Activated B cell treated with CpG ODN at 0.5 μM for 24 hours (primary cell): ENCODE measurements at regions of chr22 and their contacts with region 1.

Region 1: DNA sequence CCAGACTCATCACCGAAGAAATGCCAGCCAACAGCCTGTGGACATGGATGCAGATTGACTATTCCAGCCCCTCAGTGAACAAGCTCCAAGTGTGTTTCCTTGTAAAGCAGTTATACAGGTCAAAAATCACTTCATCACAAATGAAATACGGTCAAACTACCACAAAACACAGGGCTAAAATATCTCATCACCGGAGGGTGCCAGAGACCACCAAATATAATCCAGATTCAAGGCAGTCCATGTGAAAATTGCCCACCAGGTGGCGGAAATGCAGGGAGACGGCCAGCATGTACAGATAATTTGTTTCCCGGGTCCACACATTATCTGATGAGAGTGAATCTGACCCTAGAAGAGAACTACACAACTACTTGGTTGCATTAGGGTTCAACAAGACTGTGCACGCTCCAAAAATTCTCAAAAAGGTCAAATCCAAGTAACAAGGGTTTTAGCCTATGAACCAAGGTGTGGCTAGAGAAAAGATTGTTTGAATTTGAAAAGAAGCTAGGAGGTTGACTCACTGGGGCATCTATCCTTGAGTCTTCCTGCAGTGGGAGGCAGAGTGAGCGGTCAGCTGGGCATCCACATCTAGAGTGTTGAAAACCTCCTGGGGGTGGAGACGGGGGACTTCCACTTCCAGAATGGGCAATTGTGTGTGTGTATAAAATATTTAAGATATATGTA is 71.7 kb downstream of the IGLL5 start:
- DNase-seq: no peak
- ATAC-seq: peak; percentile 63
- H3K4me3 Mint-ChIP-seq: no peak overlapping the region
- H3K27ac Mint-ChIP-seq: no peak overlapping the region
- H3K4me1 Mint-ChIP-seq: peaks cover 15% of the 10 kb centered on the region
- H3K27me3 Mint-ChIP-seq: no peaks in the 10 kb centered on the region
- CTCF ChIP-seq: peak; percentile 94

Region 2: DNA sequence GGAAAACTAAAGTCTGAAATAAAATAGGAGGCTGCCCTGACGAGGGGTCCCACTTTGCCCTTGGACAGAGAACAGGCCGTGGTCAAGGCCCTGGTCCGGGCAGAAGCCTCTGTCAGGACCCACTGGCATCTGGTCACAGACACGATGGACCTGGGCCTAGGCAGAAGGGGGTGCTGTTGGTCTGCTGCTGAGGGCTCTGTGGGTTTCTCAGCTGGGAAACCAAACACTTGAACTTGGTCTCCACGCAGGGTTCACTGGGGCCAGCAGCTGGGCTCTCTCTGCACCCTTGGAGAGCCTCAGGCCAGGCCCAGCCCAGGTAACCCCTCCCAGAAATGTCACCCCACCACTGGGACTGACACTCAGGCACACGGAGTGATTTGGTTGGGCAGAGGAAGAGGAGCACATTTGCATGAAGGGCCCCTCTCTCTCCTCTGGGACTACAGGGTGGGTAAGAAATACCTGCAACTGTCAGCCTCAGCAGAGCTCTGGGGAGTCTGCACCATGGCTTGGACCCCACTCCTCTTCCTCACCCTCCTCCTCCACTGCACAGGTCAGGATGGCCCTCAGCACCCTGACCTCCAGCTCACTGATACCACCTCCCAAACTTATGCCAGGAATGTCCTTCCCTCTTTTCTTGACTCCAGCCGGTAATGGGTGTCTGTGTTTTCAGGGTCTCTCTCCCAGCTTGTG is 928.6 kb before region 1 on chr22:
- CTCF ChIA-PET with region 1: interaction called, 5 read pairs
- POLR2A ChIA-PET with region 1: no interaction called
- intact Hi-C with region 1: loop called (anchors 1 kb)
- DNase-seq: peak; percentile 62
- ATAC-seq: peak; percentile 79
- H3K4me3 Mint-ChIP-seq: peak overlapping the region; percentile 84
- H3K27ac Mint-ChIP-seq: peak overlapping the region; percentile 97
- H3K4me1 Mint-ChIP-seq: peaks cover 84% of the 10 kb centered on the region
- H3K27me3 Mint-ChIP-seq: no peaks in the 10 kb centered on the region
- CTCF ChIP-seq: no peak

Region 3: DNA sequence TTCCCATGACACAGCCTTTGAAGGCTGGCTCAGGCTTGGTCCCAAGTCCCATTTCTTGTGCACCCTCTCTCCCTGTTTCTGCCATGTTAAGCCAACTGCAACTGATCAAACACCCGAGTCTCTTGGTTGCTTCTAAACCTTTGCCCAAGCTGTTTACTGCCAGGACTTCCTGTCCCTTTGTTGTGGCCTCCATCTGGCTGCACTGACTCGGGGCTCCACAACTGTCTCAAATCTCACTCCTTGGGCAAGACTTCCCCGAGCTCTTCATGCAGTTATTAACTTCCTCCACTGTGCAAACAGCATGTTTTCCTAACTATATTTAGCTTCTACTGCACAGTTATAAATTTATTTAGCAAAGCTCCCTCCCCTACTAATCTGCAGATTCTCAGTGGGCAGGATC is 710.4 kb before region 1 on chr22:
- CTCF ChIA-PET with region 1: no interaction called
- POLR2A ChIA-PET with region 1: no interaction called
- intact Hi-C with region 1: no loop called
- DNase-seq: no peak
- ATAC-seq: no peak
- H3K4me3 Mint-ChIP-seq: no peak overlapping the region
- H3K27ac Mint-ChIP-seq: peak overlapping the region; percentile 12
- H3K4me1 Mint-ChIP-seq: peaks cover 48% of the 10 kb centered on the region
- H3K27me3 Mint-ChIP-seq: no peaks in the 10 kb centered on the region
- CTCF ChIP-seq: no peak

Region 4: DNA sequence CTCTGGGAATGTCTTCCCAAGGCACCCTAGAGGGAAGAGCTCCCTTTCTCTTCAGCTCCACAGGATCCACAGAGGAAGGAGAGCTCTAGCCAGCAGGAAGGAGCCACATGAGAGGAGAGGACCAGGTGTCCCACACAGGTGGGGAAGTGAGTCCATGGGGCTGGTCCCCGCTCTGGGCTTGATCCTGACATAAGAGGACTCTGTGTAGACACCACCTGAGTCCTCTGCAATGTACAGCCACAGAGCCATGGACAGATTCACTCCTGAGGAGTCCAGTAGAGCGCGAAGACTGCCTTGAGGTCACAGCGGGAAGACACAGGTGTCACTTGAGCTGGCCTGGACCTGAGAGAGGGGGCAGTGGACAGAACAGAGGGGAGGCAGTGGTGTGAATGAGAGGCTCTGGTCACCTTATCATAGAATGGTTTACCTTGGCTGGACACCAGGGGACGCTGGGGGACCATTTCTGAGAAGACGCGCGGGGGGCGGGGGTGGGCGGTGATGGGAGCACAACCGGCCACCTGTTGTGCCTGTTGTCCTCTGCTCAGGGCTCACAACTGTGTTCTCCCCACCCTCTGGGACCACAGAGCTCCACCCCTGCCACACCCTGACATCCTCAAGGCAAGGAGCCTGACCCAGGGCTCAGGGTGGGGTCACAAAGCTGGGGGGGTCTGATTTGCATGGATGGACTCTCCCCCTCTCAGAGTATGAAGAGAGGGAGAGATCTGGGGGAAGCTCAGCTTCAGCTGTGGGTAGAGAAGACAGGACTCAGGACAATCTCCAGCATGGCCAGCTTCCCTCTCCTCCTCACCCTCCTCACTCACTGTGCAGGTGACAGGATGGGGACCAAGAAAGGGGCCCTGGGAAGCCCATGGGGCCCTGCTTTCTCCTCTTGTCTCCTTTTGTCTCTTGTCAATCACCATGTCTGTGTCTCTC is 578.9 kb before region 1 on chr22:
- CTCF ChIA-PET with region 1: interaction called, 4 read pairs
- POLR2A ChIA-PET with region 1: interaction called, 15 read pairs
- intact Hi-C with region 1: no loop called
- DNase-seq: peak; percentile 46
- ATAC-seq: peak; percentile 80
- H3K4me3 Mint-ChIP-seq: peak overlapping the region; percentile 61
- H3K27ac Mint-ChIP-seq: peak overlapping the region; percentile 86
- H3K4me1 Mint-ChIP-seq: peaks cover 79% of the 10 kb centered on the region
- H3K27me3 Mint-ChIP-seq: no peaks in the 10 kb centered on the region
- CTCF ChIP-seq: no peak

Region 5: DNA sequence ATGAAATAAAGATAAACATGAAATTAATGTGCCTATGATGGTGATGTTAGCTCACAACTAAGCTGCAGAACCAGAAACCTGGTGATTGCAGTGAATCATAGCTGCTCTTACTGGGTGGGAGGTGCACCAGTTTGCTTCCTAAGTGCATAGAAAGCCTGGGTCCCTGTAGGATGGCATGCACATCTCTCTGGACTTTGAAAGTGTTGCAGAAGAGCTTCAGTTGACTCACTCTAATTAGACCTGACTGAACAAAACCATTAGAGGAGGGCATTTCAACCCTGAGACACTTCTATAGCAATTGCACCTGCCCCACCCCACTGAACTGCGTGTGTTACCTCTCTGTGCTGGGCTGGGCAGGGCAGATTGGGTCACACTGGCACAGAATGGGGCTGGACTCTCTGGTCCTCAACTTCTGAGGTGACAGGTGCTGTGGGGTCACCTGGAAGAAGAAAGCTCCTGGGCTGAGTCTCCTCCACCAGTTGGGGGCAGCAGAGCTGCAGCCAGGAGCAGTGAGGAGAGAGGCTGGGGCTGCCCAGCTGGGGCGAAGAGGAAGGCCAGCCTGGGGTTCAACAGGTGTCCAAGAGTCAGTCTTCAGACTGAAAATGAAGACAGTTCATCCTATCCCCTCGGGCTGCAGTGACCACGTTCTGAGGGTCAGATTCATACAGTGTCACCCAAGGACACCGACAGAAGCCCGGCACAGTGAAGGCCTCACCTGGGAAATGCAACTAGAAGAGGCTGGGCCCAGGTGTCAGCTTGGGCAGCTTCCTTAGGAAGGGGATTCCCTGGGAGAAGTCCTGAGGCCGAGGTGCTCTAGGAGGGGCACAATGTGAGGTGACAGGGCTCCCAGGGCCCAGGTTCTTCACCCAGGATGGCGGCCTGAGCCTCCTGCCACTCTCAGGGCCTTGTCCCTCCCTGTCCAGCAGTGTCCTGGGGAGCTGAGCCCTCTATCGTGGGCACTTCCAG is 256.8 kb before region 1 on chr22:
- CTCF ChIA-PET with region 1: interaction called, 15 read pairs
- POLR2A ChIA-PET with region 1: interaction called, 4 read pairs
- intact Hi-C with region 1: no loop called
- DNase-seq: no peak
- ATAC-seq: peak; percentile 49
- H3K4me3 Mint-ChIP-seq: no peak overlapping the region
- H3K27ac Mint-ChIP-seq: no peak overlapping the region
- H3K4me1 Mint-ChIP-seq: peaks cover 17% of the 10 kb centered on the region
- H3K27me3 Mint-ChIP-seq: no peaks in the 10 kb centered on the region
- CTCF ChIP-seq: no peak

Region 6: GRCh38 chr22:22787786-22788459 is 171.4 kb before region 1 on chr22:
- CTCF ChIA-PET with region 1: interaction called, 89 read pairs
- POLR2A ChIA-PET with region 1: interaction called, 4 read pairs
- intact Hi-C with region 1: loop called (anchors 1 kb)
- DNase-seq: peak; percentile 52
- ATAC-seq: peak; percentile 83
- H3K4me3 Mint-ChIP-seq: no peak overlapping the region
- H3K27ac Mint-ChIP-seq: no peak overlapping the region
- H3K4me1 Mint-ChIP-seq: no peaks in the 10 kb centered on the region
- H3K27me3 Mint-ChIP-seq: peaks cover 4% of the 10 kb centered on the region
- CTCF ChIP-seq: no peak

Region 7: GRCh38 chr22:22903355-22903777 is 55.9 kb before region 1 on chr22:
- CTCF ChIA-PET with region 1: interaction called, 10 read pairs
- POLR2A ChIA-PET with region 1: interaction called, 11 read pairs
- intact Hi-C with region 1: no loop called
- DNase-seq: no peak
- ATAC-seq: no peak
- H3K4me3 Mint-ChIP-seq: peak overlapping the region; percentile 87
- H3K27ac Mint-ChIP-seq: peak overlapping the region; percentile 76
- H3K4me1 Mint-ChIP-seq: peaks cover 66% of the 10 kb centered on the region
- H3K27me3 Mint-ChIP-seq: no peaks in the 10 kb centered on the region
- CTCF ChIP-seq: no peak

Region 8: DNA sequence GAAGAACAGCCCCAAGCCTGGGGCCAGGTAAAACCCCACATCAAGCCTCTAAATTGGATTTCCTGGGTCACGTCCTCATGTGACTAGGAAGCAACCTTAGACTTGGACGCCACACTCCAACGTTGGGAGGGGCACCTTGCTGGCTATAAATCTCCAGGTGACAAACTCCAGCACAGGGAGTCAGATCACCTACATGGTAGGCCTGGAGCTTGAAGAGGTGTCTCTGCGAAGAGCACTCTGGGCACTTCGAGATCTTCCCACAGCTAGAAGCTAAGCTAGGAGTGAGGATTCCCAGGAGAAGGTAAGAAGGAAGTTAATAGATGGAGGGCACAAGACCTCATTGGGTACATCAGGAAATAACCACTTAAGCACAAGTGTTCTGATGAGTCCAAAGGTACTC is 33.9 kb after region 1 on chr22:
- CTCF ChIA-PET with region 1: no interaction called
- POLR2A ChIA-PET with region 1: no interaction called
- intact Hi-C with region 1: no loop called
- DNase-seq: no peak
- ATAC-seq: no peak
- H3K4me3 Mint-ChIP-seq: no peak overlapping the region
- H3K27ac Mint-ChIP-seq: no peak overlapping the region
- H3K4me1 Mint-ChIP-seq: no peaks in the 10 kb centered on the region
- H3K27me3 Mint-ChIP-seq: peaks cover 7% of the 10 kb centered on the region
- CTCF ChIP-seq: no peak

Region 9: DNA sequence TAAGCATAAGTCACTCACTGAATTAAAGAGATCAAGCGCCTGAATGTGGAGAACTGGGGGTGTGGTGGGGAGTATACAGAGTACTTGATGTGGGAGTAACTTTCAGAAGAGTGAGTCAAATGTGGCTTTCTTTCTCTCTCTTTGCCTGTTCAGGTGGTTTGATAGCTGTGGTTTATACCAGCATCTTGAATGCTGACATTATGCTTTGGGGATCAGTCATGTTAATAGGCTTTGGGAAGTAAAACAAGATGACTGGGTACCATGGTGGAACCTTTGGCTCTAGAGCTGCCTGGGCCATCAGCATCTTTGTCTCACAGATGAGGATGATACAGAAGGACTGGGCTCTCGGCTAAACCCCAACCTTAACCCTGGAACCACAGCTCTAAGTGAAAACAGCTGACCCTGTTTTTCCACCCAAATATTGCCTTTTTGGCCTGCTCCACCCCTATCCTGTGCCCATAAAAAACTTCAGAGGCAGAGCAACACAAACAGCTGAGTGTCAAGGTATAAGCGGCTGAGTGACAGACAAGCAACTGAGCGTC is 52.9 kb after region 1 on chr22:
- CTCF ChIA-PET with region 1: no interaction called
- POLR2A ChIA-PET with region 1: no interaction called
- intact Hi-C with region 1: no loop called
- DNase-seq: no peak
- ATAC-seq: no peak
- H3K4me3 Mint-ChIP-seq: no peak overlapping the region
- H3K27ac Mint-ChIP-seq: no peak overlapping the region
- H3K4me1 Mint-ChIP-seq: no peaks in the 10 kb centered on the region
- H3K27me3 Mint-ChIP-seq: no peaks in the 10 kb centered on the region
- CTCF ChIP-seq: no peak

Region 10: DNA sequence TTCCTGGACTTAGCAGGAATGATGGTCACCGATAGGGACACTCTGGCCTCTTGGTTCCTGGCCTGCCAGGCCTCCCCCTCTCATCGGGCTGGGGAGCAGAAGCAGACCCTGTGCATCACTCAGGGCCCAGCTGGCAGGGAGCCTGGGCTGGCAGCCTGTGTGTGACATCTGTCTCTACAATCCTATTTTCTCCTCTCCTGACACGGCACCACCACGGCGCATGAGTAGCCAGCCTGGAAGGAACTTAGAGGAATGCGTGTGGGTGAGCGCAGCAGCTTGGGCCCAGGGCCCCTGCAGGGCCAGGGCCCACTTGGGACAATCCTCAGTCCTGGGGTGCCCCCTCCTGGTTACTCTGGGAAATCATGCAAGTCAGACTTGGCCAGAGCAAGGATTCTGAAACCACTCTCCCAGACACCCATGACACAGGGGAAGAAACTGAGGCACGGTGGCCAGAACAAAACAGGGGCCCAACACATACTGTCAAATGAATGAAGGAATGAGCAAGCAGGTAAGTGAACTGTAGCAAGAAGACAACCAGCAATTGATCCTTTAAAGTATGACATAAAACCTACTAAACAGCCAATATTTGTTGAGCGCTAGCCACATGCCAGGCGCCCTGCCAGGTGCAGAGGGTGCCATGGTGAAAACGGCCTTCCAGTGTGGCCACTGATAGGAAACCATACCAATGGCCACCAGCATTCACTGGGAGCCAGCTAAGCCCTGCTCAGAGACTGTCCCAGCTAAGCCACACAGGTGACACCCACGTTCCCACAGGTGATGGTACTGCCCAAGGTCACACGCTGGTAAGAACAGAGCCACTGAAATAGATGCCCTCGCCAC is 169.2 kb after region 1 on chr22:
- CTCF ChIA-PET with region 1: interaction called, 265 read pairs
- POLR2A ChIA-PET with region 1: interaction called, 10 read pairs
- intact Hi-C with region 1: loop called (anchors 1 kb)
- DNase-seq: peak; percentile 64
- ATAC-seq: peak; percentile 99
- H3K4me3 Mint-ChIP-seq: no peak overlapping the region
- H3K27ac Mint-ChIP-seq: no peak overlapping the region
- H3K4me1 Mint-ChIP-seq: peaks cover 4% of the 10 kb centered on the region
- H3K27me3 Mint-ChIP-seq: no peaks in the 10 kb centered on the region
- CTCF ChIP-seq: no peak